Vagina (tissue), 2 donors: ENCODE measurements at regions of chr1 and their contacts with region 1.

Region 1: GRCh38 chr1:167797015-167797414 is 75.2 kb downstream of the MPZL1 start:
- DNase-seq: peak in 1 of 2 donors; percentile 99
- H3K4me3 ChIP-seq: no peak overlapping the region
- H3K27ac ChIP-seq: peak overlapping the region; percentile 31
- H3K4me1 ChIP-seq: peaks cover 56% of the 10 kb centered on the region
- H3K27me3 ChIP-seq: no peaks in the 10 kb centered on the region
- CTCF ChIP-seq: no peak
- POLR2A ChIP-seq: no peak

Region 2: GRCh38 chr1:167207940-167208623 is 588.9 kb before region 1 on chr1:
- intact Hi-C with region 1: no loop called
- DNase-seq: no peak
- H3K4me3 ChIP-seq: no peak overlapping the region
- H3K27ac ChIP-seq: no peak overlapping the region
- H3K4me1 ChIP-seq: no peaks in the 10 kb centered on the region
- H3K27me3 ChIP-seq: no peaks in the 10 kb centered on the region
- CTCF ChIP-seq: no peak
- POLR2A ChIP-seq: no peak

Region 3: GRCh38 chr1:167721617-167722151 is 75.3 kb before region 1 on chr1 and contains the start of gene MPZL1:
- intact Hi-C with region 1: loop called (anchors 2 kb)
- DNase-seq: peak in 1 of 2 donors; percentile 97
- H3K4me3 ChIP-seq: peak within 1 kb of the TSS; percentile 81 to 92
- H3K27ac ChIP-seq: peak within 1 kb of the TSS; percentile 91
- H3K4me1 ChIP-seq: peaks cover 42% of the 10 kb centered on the region
- H3K27me3 ChIP-seq: no peaks in the 10 kb centered on the region
- CTCF ChIP-seq: no peak
- POLR2A ChIP-seq: peak in 1 of 2 donors; percentile 91
- total RNA-seq, gene MPZL1: 69.7 TPM

Region 4: GRCh38 chr1:167784876-167785550 is 12.0 kb before region 1 on chr1:
- intact Hi-C with region 1: no loop called
- DNase-seq: no peak
- H3K4me3 ChIP-seq: no peak overlapping the region
- H3K27ac ChIP-seq: no peak overlapping the region
- H3K4me1 ChIP-seq: peaks cover 5% of the 10 kb centered on the region
- H3K27me3 ChIP-seq: no peaks in the 10 kb centered on the region
- CTCF ChIP-seq: no peak
- POLR2A ChIP-seq: no peak

Region 5: GRCh38 chr1:168092566-168093355 is 295.7 kb after region 1 on chr1:
- intact Hi-C with region 1: no loop called
- DNase-seq: peak in 1 of 2 donors; percentile 80
- H3K4me3 ChIP-seq: no peak overlapping the region
- H3K27ac ChIP-seq: peak overlapping the region; percentile 18
- H3K4me1 ChIP-seq: peaks cover 8% of the 10 kb centered on the region
- H3K27me3 ChIP-seq: no peaks in the 10 kb centered on the region
- CTCF ChIP-seq: no peak
- POLR2A ChIP-seq: no peak

Region 6: DNA sequence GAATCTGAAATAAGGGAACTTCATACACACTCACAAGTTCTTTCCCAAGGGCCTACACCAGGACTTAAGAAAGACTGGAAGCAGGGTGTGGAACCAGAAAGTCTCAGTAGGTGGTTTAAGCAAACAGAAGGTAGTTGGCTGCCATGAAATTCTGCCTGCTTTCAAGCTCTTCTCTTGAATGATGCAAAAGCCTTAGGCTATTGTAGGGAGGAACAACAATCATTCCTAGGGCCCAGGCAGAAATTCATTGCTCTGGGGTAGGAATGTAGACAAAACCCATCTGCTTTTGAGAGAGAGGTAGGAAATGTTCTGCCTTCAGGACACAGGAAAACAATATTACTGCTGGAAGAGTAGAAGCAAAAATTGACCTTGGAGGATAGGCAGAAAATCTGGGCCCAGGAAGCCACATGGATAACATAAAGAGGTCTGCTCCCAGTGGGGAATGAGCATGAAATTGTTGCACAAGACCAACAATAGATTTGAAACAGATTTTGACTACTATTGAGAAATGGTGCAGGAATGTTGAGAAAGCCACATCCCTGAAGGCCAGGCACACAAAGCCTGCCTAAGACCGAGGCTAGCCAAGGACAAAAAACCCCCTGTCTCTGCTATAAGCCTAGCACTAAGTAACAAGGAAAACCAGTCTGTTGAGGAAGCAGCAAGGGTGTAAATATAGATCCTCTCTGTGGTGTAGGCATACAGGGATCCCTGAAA is 406.1 kb after region 1 on chr1:
- intact Hi-C with region 1: no loop called
- DNase-seq: no peak
- H3K4me3 ChIP-seq: no peak overlapping the region
- H3K27ac ChIP-seq: no peak overlapping the region
- H3K4me1 ChIP-seq: no peaks in the 10 kb centered on the region
- H3K27me3 ChIP-seq: no peaks in the 10 kb centered on the region
- CTCF ChIP-seq: no peak
- POLR2A ChIP-seq: no peak